ENCODE measurements at regions of chr3 and their contacts with region 1.

Region 1: GRCh38 chr3:148757238-148758215 is 59.8 kb downstream of the AGTR1 start:
- DNase-seq: no peak
- H3K4me3 Mint-ChIP-seq: no peak overlapping the region
- H3K27ac Mint-ChIP-seq: no peak overlapping the region
- H3K4me1 Mint-ChIP-seq: no peaks in the 10 kb centered on the region
- H3K27me3 Mint-ChIP-seq: no peaks in the 10 kb centered on the region

Region 2: GRCh38 chr3:148554367-148554766 is 203.2 kb before region 1 on chr3:
- intact Hi-C with region 1: no loop called
- DNase-seq: no peak
- H3K4me3 Mint-ChIP-seq: no peak overlapping the region
- H3K27ac Mint-ChIP-seq: no peak overlapping the region
- H3K4me1 Mint-ChIP-seq: no peaks in the 10 kb centered on the region
- H3K27me3 Mint-ChIP-seq: no peaks in the 10 kb centered on the region

Region 3: GRCh38 chr3:148778926-148779325 is 21.4 kb after region 1 on chr3:
- intact Hi-C with region 1: loop called (anchors 1 kb)
- DNase-seq: no peak
- H3K4me3 Mint-ChIP-seq: no peak overlapping the region
- H3K27ac Mint-ChIP-seq: no peak overlapping the region
- H3K4me1 Mint-ChIP-seq: no peaks in the 10 kb centered on the region
- H3K27me3 Mint-ChIP-seq: no peaks in the 10 kb centered on the region

Region 4: DNA sequence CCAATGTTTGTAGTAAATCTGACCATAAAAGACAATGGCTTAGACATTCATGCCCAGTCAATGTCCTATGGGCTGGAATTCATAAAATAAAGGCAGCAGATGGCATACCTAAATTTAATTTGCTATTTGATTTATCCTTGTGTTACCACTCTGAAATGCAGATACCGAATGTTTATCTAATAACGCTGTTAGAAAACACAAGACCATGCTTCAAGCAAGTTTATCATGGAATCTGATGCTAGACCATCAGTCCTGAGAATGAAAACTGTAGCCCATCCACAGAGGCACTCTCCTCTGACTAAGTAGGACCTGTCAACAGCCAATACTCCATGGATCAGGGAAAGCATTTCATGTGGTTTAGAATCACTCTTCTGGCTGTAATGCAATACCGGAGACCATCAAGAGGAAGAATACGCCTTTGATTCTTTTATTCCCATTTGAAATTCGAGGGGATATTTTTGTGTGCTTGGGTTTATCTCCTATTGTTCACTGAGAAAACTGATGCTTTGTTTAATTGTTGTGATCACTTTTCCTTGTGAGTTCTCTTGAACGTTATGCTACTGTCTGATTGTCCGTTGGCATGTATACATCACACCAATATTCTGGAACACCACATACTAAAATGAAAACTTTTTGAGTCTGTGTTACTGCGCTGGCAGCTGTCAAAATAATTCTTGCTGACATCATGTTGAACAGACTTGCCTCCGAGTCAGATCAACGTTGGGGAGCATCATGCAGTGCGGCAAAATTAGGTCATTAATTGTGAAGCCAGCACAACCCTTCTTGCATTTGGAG is 58.0 kb after region 1 on chr3:
- intact Hi-C with region 1: no loop called
- DNase-seq: no peak
- H3K4me3 Mint-ChIP-seq: no peak overlapping the region
- H3K27ac Mint-ChIP-seq: no peak overlapping the region
- H3K4me1 Mint-ChIP-seq: no peaks in the 10 kb centered on the region
- H3K27me3 Mint-ChIP-seq: peaks cover 2% of the 10 kb centered on the region

Region 5: DNA sequence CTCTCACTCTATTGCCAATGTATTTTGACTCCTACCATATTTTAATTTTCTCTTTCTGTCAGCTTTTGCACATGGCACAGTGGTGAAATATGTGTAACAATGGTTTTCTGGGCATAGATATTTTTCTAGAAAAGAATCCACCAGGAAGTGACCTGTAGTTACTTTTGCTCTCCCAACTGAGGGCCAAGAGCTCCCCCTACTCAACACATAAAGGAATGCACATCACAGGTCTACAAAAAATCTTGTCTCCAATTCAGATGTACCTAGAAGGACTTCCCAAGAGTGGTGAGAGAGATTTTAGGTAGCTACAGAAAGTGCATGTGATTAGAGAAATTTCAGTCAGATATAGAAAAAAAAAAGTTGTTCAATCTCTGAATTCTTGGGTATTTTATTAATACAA is 123.2 kb after region 1 on chr3:
- intact Hi-C with region 1: no loop called
- DNase-seq: no peak
- H3K4me3 Mint-ChIP-seq: no peak overlapping the region
- H3K27ac Mint-ChIP-seq: no peak overlapping the region
- H3K4me1 Mint-ChIP-seq: no peaks in the 10 kb centered on the region
- H3K27me3 Mint-ChIP-seq: peaks cover 5% of the 10 kb centered on the region